Pancreas (tissue), 10 donors: ENCODE measurements at regions of chr2 and their contacts with region 1.

Region 1: GRCh38 chr2:168773719-168774521 is 28.5 kb upstream of the NOSTRIN start:
- DNase-seq: peak; percentile 67 to 85 (median 80)
- ATAC-seq: peak; percentile 88 to 99 (median 96)
- H3K4me3 ChIP-seq: no peak overlapping the region
- H3K27ac ChIP-seq: peak overlapping the region; percentile 7 to 51 (median 22)
- H3K4me1 ChIP-seq: peaks cover 0 to 5% (median 0%) of the 10 kb centered on the region in 3 donors
- H3K27me3 ChIP-seq: no peaks in the 10 kb centered on the region
- CTCF ChIP-seq: peak; percentile 76 to 89 (median 86)

Region 2: DNA sequence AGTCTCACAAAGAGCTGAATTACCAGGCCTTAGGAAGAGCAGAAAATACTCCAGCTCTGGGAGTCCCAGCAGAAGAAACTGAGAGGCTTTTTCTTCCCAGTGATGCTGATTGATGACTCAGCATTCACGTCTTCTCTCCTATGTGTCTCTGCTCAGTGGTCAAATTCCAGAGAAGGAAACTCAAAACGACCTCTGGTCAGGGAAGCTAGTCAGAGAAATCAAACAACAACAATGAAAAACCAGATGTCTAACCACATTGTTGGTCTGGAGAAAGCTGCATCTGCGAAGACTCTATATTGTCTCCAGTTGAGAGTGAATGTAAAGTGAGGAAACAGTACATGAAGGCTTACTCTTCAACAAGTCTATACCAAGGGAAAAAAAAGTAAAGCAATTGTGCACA is 346.5 kb before region 1 on chr2:
- intact Hi-C with region 1: no loop called
- DNase-seq: no peak
- ATAC-seq: no peak
- H3K4me3 ChIP-seq: no peak overlapping the region
- H3K27ac ChIP-seq: no peak overlapping the region
- H3K4me1 ChIP-seq: no peaks in the 10 kb centered on the region
- H3K27me3 ChIP-seq: no peaks in the 10 kb centered on the region
- CTCF ChIP-seq: no peak

Region 3: DNA sequence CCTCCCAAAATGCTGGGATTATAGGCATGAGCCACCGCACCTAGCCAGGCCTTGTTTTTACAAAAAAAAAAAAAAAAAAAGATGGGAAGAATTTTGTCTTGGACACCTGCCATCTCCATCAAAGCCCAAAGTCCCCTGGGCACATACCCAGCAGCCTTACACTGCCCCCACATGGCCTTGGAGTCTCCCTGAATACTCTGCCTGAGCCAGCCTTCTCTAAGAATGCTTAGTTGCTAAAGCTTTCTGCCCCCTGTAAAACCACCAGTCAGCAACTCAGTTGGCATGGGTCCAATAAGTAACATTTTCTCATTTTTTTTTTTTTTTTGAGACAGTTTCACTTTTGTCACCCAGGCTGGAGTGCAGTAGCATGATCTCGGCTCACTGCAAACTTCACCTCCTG is 75.7 kb after region 1 on chr2:
- intact Hi-C with region 1: loop called in 1 of 3 experiments (anchors 10 kb)
- DNase-seq: peak in 5 of 6 donors; percentile 59 to 69 (median 64)
- ATAC-seq: peak; percentile 81 to 98 (median 90)
- H3K4me3 ChIP-seq: no peak overlapping the region
- H3K27ac ChIP-seq: no peak overlapping the region
- H3K4me1 ChIP-seq: no peaks in the 10 kb centered on the region
- H3K27me3 ChIP-seq: no peaks in the 10 kb centered on the region
- CTCF ChIP-seq: peak in 2 of 4 donors; percentile 11 to 16

Region 4: GRCh38 chr2:168890006-168890782 is 116.3 kb after region 1 on chr2 and contains the start of gene SPC25:
- intact Hi-C with region 1: no loop called
- DNase-seq: peak; percentile 83 to 91 (median 86)
- ATAC-seq: peak; percentile 98 to 100 (median 100)
- H3K4me3 ChIP-seq: peak within 1 kb of the TSS; percentile 18 to 54 (median 40)
- H3K27ac ChIP-seq: no peak within 1 kb of the TSS
- H3K4me1 ChIP-seq: no peaks in the 10 kb centered on the region
- H3K27me3 ChIP-seq: no peaks in the 10 kb centered on the region
- CTCF ChIP-seq: no peak
- total RNA-seq, gene SPC25: 0.14 to 2.5 (median 0.67) TPM

Region 5: GRCh38 chr2:168912901-168913369 is 139.0 kb after region 1 on chr2:
- intact Hi-C with region 1: loop called in 1 of 3 experiments (anchors 10 kb)
- DNase-seq: peak in 5 of 6 donors; percentile 11 to 75 (median 35)
- ATAC-seq: peak; percentile 64 to 87 (median 80)
- H3K4me3 ChIP-seq: no peak overlapping the region
- H3K27ac ChIP-seq: no peak overlapping the region
- H3K4me1 ChIP-seq: no peaks in the 10 kb centered on the region
- H3K27me3 ChIP-seq: no peaks in the 10 kb centered on the region
- CTCF ChIP-seq: no peak

Region 6: DNA sequence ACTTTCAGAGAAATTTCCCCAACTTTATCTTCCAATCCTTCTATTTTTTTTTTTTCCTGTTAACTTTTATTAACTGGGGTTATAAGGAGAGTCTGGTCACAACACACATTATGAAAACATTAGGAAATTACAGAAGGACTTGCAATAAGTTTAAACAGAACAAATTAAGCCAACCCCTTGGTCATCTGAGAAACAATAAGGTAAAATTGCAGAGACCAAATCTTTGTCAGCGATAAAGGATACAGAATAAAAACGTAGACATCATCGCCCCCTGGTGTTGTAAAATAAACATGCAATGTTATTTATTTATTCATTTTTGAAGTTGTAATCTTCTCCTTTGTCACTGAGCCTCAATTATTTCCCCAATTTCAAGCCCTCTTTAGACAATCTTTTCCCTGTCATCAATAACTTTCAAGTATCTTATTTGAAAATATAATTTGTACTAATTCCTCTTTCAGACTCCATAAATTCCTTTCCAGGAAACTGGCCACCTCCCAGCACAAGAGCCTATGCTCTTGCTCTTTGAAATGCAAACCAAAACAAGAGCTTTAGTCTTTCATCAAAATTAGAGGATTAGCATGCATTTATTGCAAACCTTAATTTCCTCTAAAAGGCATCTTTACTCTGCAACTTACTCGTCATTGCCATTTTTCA is 146.7 kb after region 1 on chr2:
- intact Hi-C with region 1: loop called in 2 of 3 experiments (anchors 10 kb)
- DNase-seq: no peak
- ATAC-seq: peak in 3 of 4 donors; percentile 51 to 68 (median 56)
- H3K4me3 ChIP-seq: no peak overlapping the region
- H3K27ac ChIP-seq: no peak overlapping the region
- H3K4me1 ChIP-seq: no peaks in the 10 kb centered on the region
- H3K27me3 ChIP-seq: peaks cover 0 to 3% (median 0%) of the 10 kb centered on the region in 4 donors
- CTCF ChIP-seq: peak in 3 of 4 donors; percentile 24 to 63 (median 46)